ENCODE measurements at regions of chr2 and their contacts with region 1.

Region 1: DNA sequence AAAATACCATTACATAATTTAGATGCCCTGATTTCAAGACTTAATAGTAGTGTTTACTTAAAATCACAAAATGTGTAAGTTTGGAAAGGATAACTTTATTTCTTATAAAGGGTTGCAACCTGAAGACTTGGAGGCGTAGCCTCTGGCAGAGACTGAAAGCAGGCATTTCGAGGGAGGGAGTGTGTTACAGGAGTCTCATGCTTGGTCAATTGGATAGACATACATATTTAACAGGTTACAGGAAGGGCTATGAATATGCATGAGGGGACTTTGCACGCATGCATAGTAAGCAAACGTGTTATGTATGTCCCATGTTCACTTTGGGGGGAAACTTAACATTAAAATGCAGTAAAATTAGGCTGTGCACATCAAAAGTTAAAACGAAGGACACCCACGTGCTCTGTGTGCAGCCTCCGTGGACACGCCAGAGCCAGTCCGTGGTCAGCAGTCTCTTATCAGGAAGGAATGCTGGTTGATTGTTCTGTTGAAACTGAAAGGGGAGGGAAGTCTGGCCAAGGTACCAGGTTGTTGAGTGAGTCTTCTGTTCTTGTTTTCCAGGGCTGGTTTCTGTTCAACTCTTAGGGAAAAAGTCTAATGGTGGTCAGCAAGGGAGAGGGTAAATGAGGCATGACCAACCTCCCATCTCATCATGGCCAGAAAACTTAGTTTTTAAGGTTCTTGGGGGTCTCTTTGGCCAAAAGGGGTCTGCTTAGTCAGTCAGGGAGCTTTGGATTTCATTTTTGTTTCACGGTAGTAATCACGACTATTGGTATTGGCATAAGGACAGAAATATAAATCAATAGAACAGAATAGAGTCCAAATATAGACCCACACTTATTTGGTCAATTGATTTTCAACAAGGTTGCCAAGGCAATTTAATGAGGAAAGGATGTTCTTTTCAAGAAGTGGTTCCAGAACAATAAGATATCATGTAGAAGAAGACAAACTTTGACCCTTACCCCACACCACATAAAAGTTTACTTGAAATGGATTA is 121.9 kb downstream of the MCFD2 start:
- DNase-seq: no peak
- ATAC-seq: peak; percentile 62

Region 2: DNA sequence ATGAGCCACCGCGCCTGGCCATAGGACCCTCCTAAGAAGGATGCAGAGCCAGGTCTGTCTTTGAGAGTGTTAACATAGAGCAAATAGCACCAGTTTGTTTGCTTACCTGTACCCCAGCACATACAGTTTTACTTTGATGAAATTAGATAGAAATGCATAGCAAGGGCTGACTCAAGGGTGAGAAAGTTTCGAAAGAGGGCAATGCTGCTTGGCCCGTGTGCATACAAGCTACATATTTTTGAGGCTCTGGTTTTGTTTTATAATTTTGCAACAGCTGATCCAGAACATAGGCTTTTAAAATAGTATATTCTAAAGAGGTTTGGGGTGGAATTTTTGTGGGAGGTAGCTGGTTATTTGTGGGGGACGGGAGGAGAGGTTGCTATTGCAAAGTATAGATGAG is 29.9 kb before region 1 on chr2:
- intact Hi-C with region 1: loop called (anchors 2 kb)
- DNase-seq: no peak
- ATAC-seq: no peak

Region 3: GRCh38 chr2:47437287-47437686 is 643.6 kb after region 1 on chr2:
- intact Hi-C with region 1: no loop called
- DNase-seq: no peak
- ATAC-seq: peak; percentile 74

Measured in Right ventricle myocardium superior (tissue), 1 donor.